ENCODE measurements at regions of chr15 and their contacts with region 1.

Region 1: GRCh38 chr15:75201609-75202250 is at the start of gene C15orf39:
- DNase-seq: peak; percentile 92
- CTCF ChIP-seq: peak; percentile 88

Region 2: DNA sequence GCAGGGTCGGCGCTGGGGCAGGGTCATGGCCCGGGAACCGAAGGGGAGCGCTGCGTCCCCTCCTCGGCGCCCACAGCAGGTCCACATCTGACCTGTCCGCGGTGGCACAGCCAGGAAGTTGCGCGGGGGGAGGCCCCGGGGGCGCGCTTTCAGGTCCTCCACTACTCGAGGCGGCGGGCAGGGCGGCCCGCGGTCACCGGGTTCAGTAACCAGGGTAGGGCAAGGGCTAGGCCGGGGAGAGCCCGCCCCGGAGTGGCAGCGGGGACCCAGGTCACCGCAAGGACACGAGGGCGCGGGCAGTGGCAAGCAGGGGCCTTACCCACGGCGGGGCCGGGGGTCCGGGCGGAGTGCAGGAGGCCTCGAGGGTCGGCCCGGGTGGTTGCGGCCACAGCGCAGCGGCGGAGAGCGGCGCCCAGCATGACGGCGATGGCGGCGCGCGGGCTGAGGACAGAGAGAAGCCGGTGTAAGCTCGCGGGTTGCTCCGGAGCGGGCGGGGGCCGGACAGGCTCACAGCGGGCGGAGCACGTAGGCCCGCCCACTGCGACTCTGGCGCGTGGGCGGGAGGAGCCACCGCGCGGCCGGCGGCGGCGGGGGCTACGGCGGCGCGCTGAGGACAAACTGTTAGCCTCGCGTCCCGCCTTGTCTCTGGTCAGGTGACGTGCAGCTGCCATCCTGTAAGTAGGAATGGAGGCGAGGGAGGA is 264.0 kb before region 1 on chr15 and contains the start of gene COX5A:
- CTCF ChIA-PET with region 1: no interaction called
- POLR2A ChIA-PET with region 1: no interaction called
- DNase-seq: peak; percentile 95
- CTCF ChIP-seq: no peak

Region 3: GRCh38 chr15:75029378-75030022 is 172.2 kb before region 1 on chr15:
- CTCF ChIA-PET with region 1: interaction called, 167 read pairs
- POLR2A ChIA-PET with region 1: interaction called, 3 read pairs
- DNase-seq: peak; percentile 79
- CTCF ChIP-seq: peak; percentile 95

Region 4: GRCh38 chr15:75069301-75069925 is 132.3 kb before region 1 on chr15:
- CTCF ChIA-PET with region 1: interaction called, 16 read pairs
- POLR2A ChIA-PET with region 1: no interaction called
- DNase-seq: peak; percentile 83
- CTCF ChIP-seq: no peak

Region 5: DNA sequence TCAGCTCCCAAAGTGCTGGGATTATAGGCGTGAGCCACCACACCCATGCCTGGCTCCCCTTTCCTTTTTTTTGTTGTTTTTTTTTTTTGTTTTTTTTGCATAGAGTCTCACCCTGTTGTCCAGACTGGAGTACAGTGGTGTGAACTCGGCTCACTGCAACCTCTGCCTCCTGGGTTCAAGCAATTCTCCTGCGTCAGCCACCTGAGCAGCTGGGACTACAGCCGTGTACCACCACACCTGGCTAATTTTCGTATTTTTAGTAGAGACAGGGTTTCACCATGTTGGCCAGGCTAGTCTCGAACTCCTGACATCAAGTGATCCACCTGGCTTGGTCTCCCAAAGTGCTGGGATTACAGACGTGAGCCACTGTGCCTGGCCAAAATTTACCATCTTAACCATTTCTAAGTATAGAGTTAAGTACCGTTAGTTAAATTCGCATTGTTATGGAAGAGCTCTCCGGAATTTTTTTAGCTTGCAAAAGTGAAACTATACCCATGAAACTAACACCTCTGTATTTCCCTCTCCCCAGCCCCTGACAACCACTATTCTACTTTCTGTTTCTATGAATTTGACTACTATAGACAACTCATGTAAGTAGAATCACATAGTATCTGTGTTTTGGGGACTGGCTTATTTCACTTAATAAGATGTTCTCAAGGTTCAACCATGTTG is 71.0 kb before region 1 on chr15:
- CTCF ChIA-PET with region 1: interaction called, 13 read pairs
- POLR2A ChIA-PET with region 1: interaction called, 4 read pairs
- DNase-seq: peak; percentile 59
- CTCF ChIP-seq: no peak

Measured in GM10248 (cell line).